PC-3 (cell line): ENCODE measurements at regions of chr1 and their contacts with region 1.

Region 1: DNA sequence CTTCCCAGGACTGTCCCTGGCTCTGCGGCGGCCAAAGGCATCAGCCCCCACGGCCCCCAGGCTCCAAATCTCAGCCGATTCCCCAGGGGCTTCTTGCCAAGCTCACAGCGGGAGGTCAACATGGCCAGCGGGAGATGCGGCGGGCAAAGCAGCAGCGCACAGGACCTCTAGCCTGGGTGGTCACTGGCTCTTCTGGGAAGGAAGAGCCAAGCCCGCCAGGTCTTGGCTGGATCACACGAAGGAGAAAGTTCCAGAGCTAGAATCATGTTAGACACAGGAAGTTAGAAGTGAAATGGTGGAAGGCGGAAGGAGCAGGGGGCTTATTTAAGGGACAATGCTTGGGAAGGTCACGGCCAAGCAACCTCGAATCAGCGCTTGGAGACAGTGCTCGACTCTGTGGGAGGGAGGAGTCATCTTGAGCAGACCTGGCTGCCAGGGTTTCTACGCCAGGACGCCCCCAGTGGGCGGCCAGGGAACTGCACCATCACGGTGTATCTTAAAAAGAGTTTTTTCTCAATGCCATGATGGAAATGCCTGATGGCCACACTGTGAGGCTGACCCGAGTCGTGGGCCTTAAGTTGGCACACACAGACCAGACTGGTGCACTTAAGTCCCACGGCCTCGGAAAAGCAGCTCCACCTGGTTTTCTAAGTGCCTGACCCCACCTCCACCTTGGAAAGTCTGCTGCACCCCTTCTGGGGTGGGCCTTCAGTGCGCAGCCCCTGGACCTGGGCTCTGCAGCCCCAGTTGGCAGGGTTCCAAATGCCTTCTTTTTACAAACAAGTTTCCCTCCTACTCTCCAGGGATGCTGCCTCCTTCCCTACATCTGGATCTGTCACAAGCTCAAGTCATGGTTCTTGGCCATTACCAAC is 29.3 kb downstream of the SLC66A1 start:
- DNase-seq: peak; percentile 83
- ATAC-seq: peak; percentile 25
- H3K4me3 ChIP-seq: no peak overlapping the region
- H3K27ac ChIP-seq: no peak overlapping the region
- H3K4me1 ChIP-seq: peaks cover 20% of the 10 kb centered on the region
- H3K27me3 ChIP-seq: no peaks in the 10 kb centered on the region
- CTCF ChIP-seq: peak; percentile 81

Region 2: GRCh38 chr1:19273106-19273843 is 68.2 kb before region 1 on chr1:
- CTCF ChIA-PET with region 1: no interaction called
- POLR2A ChIA-PET with region 1: no interaction called
- intact Hi-C with region 1: no loop called
- DNase-seq: no peak
- ATAC-seq: no peak
- H3K4me3 ChIP-seq: no peak overlapping the region
- H3K27ac ChIP-seq: no peak overlapping the region
- H3K4me1 ChIP-seq: peaks cover 4% of the 10 kb centered on the region
- H3K27me3 ChIP-seq: no peaks in the 10 kb centered on the region
- CTCF ChIP-seq: no peak

Region 3: GRCh38 chr1:19582302-19582701 is 240.9 kb after region 1 on chr1:
- CTCF ChIA-PET with region 1: no interaction called
- POLR2A ChIA-PET with region 1: no interaction called
- intact Hi-C with region 1: no loop called
- DNase-seq: peak; percentile 60
- ATAC-seq: no peak; the same call in 1 of the 2 replicates
- H3K4me3 ChIP-seq: no peak overlapping the region
- H3K27ac ChIP-seq: no peak overlapping the region
- H3K4me1 ChIP-seq: no peaks in the 10 kb centered on the region
- H3K27me3 ChIP-seq: no peaks in the 10 kb centered on the region
- CTCF ChIP-seq: peak; percentile 82

Region 4: DNA sequence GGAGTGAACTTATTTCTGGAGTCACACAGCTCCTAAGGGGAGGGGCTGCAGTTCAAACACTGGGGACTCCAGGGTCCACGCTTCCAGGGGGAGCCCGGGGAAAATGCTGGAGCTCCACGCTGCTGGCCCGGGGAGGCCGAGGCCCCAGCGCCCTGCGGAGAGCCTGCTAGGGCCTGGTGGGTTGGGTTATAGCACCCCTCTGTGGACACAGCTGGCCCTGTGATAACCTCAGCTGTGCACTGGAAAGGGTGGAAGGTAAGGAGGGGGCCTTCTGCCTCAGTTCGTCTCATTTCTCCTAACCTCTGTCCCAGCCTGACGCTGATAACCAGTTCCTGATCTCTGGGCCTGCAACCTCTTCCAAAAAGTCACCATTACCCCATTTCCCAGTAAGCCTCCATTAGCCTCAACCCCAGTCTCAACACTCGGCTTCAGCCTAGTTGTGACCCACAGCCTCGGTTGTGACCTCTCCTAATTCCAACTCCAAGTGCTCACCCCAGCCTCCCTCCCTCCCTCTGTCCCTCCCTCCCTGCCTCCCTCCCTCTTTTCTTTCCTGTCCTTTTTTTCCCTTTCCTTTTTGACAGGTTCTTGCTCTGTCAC is 309.8 kb after region 1 on chr1:
- CTCF ChIA-PET with region 1: interaction called, 7 read pairs
- POLR2A ChIA-PET with region 1: no interaction called
- intact Hi-C with region 1: loop called (anchors 5 kb)
- DNase-seq: peak; percentile 16
- ATAC-seq: peak; percentile 52
- H3K4me3 ChIP-seq: no peak overlapping the region
- H3K27ac ChIP-seq: no peak overlapping the region
- H3K4me1 ChIP-seq: peaks cover 23% of the 10 kb centered on the region
- H3K27me3 ChIP-seq: no peaks in the 10 kb centered on the region
- CTCF ChIP-seq: peak; percentile 68